CD4-positive, alpha-beta T cell (primary cell): ENCODE measurements at regions of chr11 and their contacts with region 1.

Region 1: DNA sequence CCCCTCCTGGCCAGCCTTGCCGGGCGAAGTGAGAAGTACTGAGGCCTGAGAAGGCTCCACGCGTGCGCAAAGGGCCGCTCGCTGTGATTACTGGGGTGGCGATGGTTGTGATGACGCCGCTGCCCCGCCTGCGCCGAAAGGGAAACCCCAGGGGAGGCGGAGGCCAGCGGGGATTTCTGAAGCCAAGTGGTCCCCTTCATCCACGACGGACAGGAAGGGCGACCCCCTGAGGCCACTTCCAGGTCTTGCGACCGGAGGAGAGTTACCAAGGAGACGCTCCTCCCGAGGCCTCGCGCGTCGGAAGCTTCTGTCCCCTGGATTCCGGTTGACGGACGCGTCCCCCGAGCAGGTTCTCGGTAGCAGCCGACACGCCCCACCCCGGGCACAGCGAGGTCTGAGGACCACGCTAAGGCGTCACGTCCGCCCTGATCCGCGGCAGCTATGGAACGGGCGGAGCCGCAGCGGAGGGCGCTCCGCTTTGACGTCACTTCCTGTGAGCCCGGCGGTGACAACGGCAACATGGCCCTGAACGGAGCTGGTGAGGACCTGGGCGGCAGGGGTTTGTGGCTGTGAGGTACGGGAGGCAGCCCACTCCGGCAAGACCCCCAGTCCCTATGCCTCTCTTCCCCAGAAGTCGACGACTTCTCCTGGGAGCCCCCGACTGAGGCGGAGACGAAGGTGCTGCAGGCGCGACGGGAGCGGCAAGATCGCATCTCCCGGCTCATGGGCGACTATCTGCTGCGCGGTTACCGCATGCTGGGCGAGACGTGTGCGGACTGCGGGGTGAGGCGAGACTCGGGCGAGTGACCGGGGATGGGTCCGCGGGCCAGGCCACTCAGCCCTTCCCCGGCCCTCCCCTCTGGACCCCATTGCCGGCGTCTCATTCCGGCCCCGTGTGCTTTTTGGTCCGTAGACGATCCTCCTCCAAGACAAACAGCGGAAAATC is at the start of gene ZNRD2:
- DNase-seq: peak; percentile 96 to 100 (median 98)
- ATAC-seq: peak; percentile 71
- H3K4me3 ChIP-seq: peak within 1 kb of the TSS; percentile 89
- H3K4me3 Mint-ChIP-seq: peak within 1 kb of the TSS; percentile 100
- H3K27ac ChIP-seq: peak within 1 kb of the TSS; percentile 99 to 100
- H3K27ac Mint-ChIP-seq: peak within 1 kb of the TSS; percentile 98
- H3K4me1 ChIP-seq: peaks cover 87% of the 10 kb centered on the region
- H3K4me1 Mint-ChIP-seq: peaks cover 86% of the 10 kb centered on the region
- H3K27me3 ChIP-seq: no peaks in the 10 kb centered on the region
- H3K27me3 Mint-ChIP-seq: no peaks in the 10 kb centered on the region
- CTCF ChIP-seq: no peak
- total RNA-seq, gene ZNRD2: 38.7 to 39.9 TPM

Region 2: DNA sequence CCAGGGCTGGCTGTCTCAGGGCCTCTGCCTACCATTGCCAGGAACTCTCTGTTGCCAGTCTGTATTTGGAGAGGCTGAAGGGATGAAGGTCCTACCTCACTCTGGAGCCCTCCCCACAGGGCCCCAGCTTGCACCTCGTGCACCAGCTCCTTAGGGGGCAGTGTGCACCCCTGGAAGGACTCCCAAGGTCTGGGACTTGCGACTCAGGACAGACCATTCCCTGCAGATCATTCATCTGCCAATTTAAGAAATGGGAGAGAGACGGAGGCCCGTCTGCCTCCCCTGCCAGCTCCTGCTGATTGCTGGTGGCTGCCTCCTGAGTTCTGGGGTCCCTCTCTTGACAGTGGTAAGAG is 98.9 kb before region 1 on chr11:
- CTCF ChIA-PET with region 1: no interaction called
- POLR2A ChIA-PET with region 1: no interaction called
- intact Hi-C with region 1: no loop called
- DNase-seq: peak in 5 of 14 experiments; percentile 15 to 64 (median 32)
- ATAC-seq: no peak
- H3K4me3 ChIP-seq: peak overlapping the region; percentile 3
- H3K4me3 Mint-ChIP-seq: no peak overlapping the region
- H3K27ac ChIP-seq: peak overlapping the region; percentile 72 to 76
- H3K27ac Mint-ChIP-seq: peak overlapping the region; percentile 92
- H3K4me1 ChIP-seq: peaks cover 26% of the 10 kb centered on the region
- H3K4me1 Mint-ChIP-seq: peaks cover 16% of the 10 kb centered on the region
- H3K27me3 ChIP-seq: no peaks in the 10 kb centered on the region
- H3K27me3 Mint-ChIP-seq: no peaks in the 10 kb centered on the region
- CTCF ChIP-seq: no peak

Region 3: DNA sequence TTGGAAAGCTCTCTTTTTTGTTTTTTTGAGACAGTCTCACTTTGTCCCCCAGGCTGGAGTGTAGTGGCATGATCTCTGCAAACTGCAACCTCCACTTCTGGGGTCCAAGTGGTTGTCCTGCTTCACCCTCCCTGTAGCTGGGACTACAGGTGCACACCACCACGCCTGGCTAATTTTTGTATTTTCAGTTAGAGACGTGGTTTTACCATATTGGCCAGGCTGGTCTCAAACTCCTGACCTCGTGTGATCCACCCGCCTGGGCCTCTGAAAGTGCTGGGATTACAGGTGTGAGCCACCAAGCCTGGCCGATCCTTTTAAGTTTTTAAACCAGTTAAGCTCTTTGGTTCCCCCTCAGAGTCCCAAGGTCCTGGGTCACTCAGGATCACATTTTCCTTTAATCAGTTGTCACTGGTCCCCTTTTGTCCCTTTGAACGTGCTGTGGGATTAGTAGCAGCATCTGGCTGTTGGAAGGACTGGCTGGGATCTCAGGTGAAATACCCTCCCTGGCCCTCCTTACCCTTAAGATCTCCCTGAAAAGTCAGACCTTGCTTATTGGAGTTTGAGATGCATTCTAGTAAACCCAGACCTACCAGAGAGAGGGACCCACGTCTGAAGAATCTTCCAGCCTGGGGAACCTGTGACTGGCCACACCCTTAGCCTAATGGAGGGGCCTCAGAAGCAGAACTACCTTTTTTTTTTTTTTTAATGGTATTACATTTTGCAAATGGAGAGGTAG is 63.3 kb before region 1 on chr11:
- CTCF ChIA-PET with region 1: no interaction called
- POLR2A ChIA-PET with region 1: interaction called, 42 read pairs
- intact Hi-C with region 1: no loop called
- DNase-seq: peak in 10 of 14 experiments; percentile 34 to 70 (median 47)
- ATAC-seq: peak; percentile 31
- H3K4me3 ChIP-seq: peak overlapping the region; percentile 73
- H3K4me3 Mint-ChIP-seq: no peak overlapping the region
- H3K27ac ChIP-seq: peak overlapping the region; percentile 46
- H3K27ac Mint-ChIP-seq: no peak overlapping the region
- H3K4me1 ChIP-seq: peaks cover 56% of the 10 kb centered on the region
- H3K4me1 Mint-ChIP-seq: peaks cover 57% of the 10 kb centered on the region
- H3K27me3 ChIP-seq: no peaks in the 10 kb centered on the region
- H3K27me3 Mint-ChIP-seq: no peaks in the 10 kb centered on the region
- CTCF ChIP-seq: no peak

Region 4: DNA sequence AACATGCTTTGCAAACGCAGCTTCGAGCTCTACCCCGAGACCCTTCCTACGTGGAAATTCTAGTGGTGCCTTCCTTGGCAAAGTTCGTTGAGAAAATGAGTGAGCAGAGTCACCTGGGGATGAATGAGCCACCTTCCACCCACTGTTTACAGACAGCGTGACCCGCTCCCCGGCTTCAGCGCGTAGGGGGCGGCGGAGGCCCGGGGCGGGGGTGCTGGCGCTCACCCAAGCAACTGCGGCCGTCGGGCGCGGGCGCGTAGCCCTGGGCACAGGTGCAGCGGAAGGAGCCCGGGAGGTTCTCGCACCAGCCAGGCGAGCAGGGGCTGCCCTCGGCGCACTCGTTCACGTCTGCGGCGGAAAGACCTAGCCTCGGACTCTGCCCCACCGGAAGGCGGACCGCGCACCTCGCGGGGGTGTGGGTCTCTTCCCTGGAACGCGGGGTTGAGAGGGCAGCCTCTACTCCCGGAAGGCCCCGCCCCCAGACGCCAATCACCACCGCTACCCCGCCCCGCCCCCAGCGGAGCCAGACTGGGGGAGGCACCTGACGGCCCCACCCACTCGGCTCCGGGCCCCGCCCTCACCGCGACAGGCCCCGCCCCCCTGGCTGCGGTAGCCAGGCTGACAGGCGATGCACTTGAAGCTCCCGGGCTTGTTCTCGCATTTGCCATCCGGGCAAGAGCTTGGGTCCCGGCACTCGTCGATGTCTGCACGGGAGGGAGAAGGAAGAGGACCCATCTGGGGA is 23.9 kb before region 1 on chr11:
- CTCF ChIA-PET with region 1: interaction called, 64 read pairs
- POLR2A ChIA-PET with region 1: interaction called, 52 read pairs
- intact Hi-C with region 1: no loop called
- DNase-seq: peak; percentile 96 to 100 (median 98)
- ATAC-seq: peak; percentile 80
- H3K4me3 ChIP-seq: peak overlapping the region; percentile 54
- H3K4me3 Mint-ChIP-seq: peak overlapping the region; percentile 86
- H3K27ac ChIP-seq: peak overlapping the region; percentile 57 to 82
- H3K27ac Mint-ChIP-seq: peak overlapping the region; percentile 81
- H3K4me1 ChIP-seq: peaks cover 49% of the 10 kb centered on the region
- H3K4me1 Mint-ChIP-seq: peaks cover 67% of the 10 kb centered on the region
- H3K27me3 ChIP-seq: no peaks in the 10 kb centered on the region
- H3K27me3 Mint-ChIP-seq: no peaks in the 10 kb centered on the region
- CTCF ChIP-seq: no peak

Region 5: GRCh38 chr11:65588199-65589054 is 18.2 kb after region 1 on chr11:
- CTCF ChIA-PET with region 1: interaction called, 31 read pairs
- POLR2A ChIA-PET with region 1: interaction called, 28 read pairs
- intact Hi-C with region 1: loop called (anchors 1 kb)
- DNase-seq: peak; percentile 63 to 90 (median 74)
- ATAC-seq: peak; percentile 99
- H3K4me3 ChIP-seq: no peak overlapping the region
- H3K4me3 Mint-ChIP-seq: no peak overlapping the region
- H3K27ac ChIP-seq: peak overlapping the region; percentile 1 to 60
- H3K27ac Mint-ChIP-seq: peak overlapping the region; percentile 21
- H3K4me1 ChIP-seq: peaks cover 33% of the 10 kb centered on the region
- H3K4me1 Mint-ChIP-seq: peaks cover 17% of the 10 kb centered on the region
- H3K27me3 ChIP-seq: no peaks in the 10 kb centered on the region
- H3K27me3 Mint-ChIP-seq: no peaks in the 10 kb centered on the region
- CTCF ChIP-seq: peak; percentile 70

Region 6: DNA sequence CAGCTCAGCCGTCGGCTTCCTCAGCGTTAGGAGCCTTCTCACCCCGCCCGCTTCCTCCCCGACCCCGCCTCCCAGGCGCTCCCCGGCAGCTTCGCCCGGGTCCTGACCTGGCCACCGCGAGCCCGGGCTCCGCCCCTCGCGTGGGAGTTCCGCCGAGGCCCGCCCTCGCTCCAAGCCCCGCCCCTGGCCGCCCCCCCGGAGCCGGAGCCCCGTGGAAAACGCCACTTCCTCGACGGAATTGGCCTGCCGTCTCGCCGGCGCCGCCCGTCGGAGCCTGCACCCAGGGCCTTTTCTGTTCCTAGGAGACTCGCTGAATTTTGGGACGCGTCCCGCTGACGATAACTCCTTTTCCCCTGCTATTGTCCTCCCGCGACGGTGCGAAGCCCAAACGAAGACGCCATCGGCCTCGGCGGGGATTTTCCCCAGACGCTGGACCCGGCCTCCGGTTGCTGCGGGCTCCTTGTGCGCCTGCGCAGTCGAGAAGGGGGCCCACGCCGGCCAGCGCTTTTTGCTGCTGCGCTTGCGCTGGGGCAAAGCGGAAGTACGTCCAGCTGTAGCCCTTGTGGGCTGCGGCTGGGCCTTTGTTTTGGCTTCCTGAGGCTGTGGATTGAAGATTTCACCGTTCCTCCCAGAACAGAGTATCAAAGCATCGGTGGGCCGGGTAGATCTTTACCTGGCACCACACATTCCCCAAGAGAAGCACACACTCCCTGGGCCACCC is 82.4 kb after region 1 on chr11:
- CTCF ChIA-PET with region 1: no interaction called
- POLR2A ChIA-PET with region 1: interaction called, 15 read pairs
- intact Hi-C with region 1: no loop called
- DNase-seq: peak; percentile 92 to 99 (median 96)
- ATAC-seq: peak; percentile 75
- H3K4me3 ChIP-seq: peak overlapping the region; percentile 66
- H3K4me3 Mint-ChIP-seq: peak overlapping the region; percentile 88
- H3K27ac ChIP-seq: peak overlapping the region; percentile 95 to 99
- H3K27ac Mint-ChIP-seq: peak overlapping the region; percentile 97
- H3K4me1 ChIP-seq: peaks cover 60% of the 10 kb centered on the region
- H3K4me1 Mint-ChIP-seq: peaks cover 54% of the 10 kb centered on the region
- H3K27me3 ChIP-seq: no peaks in the 10 kb centered on the region
- H3K27me3 Mint-ChIP-seq: no peaks in the 10 kb centered on the region
- CTCF ChIP-seq: no peak